ENCODE measurements at regions of chr2 and their contacts with region 1.

Region 1: GRCh38 chr2:240566203-240567136 is 1.8 kb upstream of the RNPEPL1 start:
- DNase-seq: peak; percentile 96
- H3K4me3 Mint-ChIP-seq: peak overlapping the region; percentile 93
- H3K27ac Mint-ChIP-seq: peak overlapping the region; percentile 98
- H3K4me1 Mint-ChIP-seq: peaks cover 64% of the 10 kb centered on the region
- H3K27me3 Mint-ChIP-seq: no peaks in the 10 kb centered on the region

Region 2: GRCh38 chr2:240513549-240514287 is 52.8 kb before region 1 on chr2:
- CTCF ChIA-PET with region 1: interaction called, 26 read pairs
- POLR2A ChIA-PET with region 1: interaction called, 4 read pairs
- intact Hi-C with region 1: loop called (anchors 5 kb)
- DNase-seq: peak; percentile 91
- H3K4me3 Mint-ChIP-seq: no peak overlapping the region
- H3K27ac Mint-ChIP-seq: peak overlapping the region; percentile 70
- H3K4me1 Mint-ChIP-seq: peaks cover 15% of the 10 kb centered on the region
- H3K27me3 Mint-ChIP-seq: no peaks in the 10 kb centered on the region

Region 3: DNA sequence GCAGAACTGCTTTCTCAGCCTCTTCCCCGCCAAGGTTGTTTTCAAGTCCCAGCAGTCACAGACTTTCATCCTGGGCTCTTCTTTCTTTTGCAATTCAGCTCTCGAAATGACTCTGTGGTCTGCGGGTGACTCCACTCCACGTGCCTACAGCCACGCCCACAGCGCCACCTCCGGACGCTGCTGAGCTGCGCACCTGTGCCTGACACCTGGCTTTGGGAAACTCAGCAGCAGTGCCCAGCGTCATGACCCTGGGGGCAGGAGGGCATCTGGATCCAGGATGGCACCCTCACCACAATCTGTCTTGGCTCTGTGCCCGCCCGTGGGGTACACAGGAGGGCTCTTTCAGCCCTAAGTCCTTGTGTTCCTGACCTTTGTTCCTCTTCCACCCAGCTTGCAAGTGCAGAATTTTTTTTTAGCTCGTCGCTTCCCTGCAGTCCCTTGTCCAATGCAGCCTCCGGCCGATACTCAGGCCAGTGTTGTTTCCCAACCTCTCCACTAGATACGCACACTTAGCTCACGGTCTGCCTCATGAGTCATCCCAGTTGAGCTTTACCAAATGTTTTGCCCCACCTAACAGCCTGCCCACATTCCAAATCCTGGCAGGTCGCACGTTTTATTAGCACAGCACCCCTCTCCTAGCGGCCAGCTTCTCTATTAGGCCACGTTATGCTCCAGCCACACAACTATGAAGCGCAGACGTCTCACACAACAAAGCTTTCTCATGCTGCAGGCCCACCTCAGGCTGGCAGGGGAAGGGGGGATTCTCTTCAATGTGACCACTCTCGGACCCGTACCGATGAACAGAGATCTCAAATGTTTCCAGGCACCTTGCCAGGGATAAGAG is 13.5 kb after region 1 on chr2:
- CTCF ChIA-PET with region 1: interaction called, 89 read pairs
- POLR2A ChIA-PET with region 1: interaction called, 34 read pairs
- intact Hi-C with region 1: loop called (anchors 1 kb)
- DNase-seq: peak; percentile 91
- H3K4me3 Mint-ChIP-seq: no peak overlapping the region
- H3K27ac Mint-ChIP-seq: peak overlapping the region; percentile 90
- H3K4me1 Mint-ChIP-seq: peaks cover 39% of the 10 kb centered on the region
- H3K27me3 Mint-ChIP-seq: no peaks in the 10 kb centered on the region

Region 4: DNA sequence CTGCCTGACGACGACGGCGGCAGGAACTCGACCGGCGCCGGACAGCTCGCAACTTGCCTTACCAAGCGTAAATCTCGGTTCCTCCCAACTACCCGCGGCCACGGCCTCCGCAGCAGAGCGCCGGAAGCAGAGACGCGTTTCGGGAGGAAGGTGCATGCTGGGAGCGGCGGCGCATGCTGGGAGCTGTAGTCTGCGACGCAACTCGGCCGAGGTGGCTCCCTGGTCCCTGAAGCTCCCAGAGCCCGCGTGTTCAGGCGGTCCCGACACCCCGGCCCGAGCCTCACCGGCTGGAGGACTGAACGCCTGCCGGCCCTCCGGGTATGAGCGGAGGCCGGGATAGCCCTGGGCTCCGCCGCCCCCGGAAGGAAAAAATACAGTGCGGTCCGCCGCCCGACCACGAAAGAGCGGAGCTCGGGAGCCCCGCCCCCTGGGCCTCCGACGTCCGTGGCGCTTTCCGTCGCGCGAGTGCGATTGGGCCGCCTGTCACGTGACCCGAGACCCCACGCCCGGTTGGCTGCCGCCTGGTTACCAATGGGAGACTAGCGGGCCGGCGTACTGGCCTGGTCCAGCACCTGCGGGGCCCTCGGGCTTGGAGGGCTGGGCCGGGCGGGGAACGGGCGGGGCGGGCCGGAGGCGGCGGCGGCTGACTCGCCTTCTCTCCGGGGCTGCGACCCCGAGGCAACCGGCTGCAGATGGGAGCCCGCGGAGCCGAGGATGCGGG is 19.9 kb after region 1 on chr2 and contains the start of gene CAPN10:
- CTCF ChIA-PET with region 1: interaction called, 89 read pairs
- POLR2A ChIA-PET with region 1: interaction called, 57 read pairs
- intact Hi-C with region 1: loop called (anchors 1 kb)
- DNase-seq: peak; percentile 98
- H3K4me3 Mint-ChIP-seq: peak within 1 kb of the TSS; percentile 98
- H3K27ac Mint-ChIP-seq: peak within 1 kb of the TSS; percentile 86
- H3K4me1 Mint-ChIP-seq: peaks cover 39% of the 10 kb centered on the region
- H3K27me3 Mint-ChIP-seq: no peaks in the 10 kb centered on the region
- total RNA-seq, gene CAPN10: 32.6 to 33.9 TPM

Region 5: DNA sequence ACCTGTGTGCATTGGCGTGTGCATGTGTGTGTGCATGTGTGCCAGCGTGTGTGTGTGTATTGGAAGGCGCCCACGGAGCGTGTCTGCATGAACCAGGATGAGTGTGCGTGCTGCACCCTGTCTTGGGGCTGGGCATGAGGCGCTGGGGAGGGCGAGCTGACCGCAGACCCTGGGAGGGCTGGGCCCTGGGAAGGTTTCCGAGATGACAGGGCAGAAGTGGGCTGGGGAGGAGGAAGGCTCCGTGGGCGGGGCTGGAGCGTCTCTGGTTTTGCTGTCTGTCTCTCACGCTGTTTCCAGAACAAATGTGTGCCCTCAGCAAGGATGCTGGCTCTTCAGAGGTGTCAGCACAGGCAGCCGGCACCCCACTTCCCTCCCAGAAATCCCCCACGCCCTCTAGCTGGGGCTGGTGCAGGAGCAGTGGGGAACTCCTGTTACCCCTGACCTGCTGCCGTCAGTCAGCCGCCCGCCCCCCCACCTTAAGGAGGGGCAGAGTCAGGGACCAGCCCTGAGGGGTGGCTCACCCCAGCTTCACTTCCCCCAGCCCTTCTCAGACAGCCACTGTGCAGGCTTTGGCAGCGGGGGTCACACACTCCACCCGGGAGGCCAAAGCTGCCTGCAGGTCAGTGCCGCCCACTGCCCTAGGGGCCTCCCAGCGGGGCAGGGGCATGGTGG is 58.6 kb after region 1 on chr2 and contains the start of gene GPR35:
- CTCF ChIA-PET with region 1: interaction called, 8 read pairs
- POLR2A ChIA-PET with region 1: interaction called, 26 read pairs
- intact Hi-C with region 1: loop called (anchors 1 kb)
- DNase-seq: peak; percentile 87
- H3K4me3 Mint-ChIP-seq: peak within 1 kb of the TSS; percentile 58
- H3K27ac Mint-ChIP-seq: peak within 1 kb of the TSS; percentile 69
- H3K4me1 Mint-ChIP-seq: peaks cover 48% of the 10 kb centered on the region
- H3K27me3 Mint-ChIP-seq: no peaks in the 10 kb centered on the region
- total RNA-seq, gene GPR35: 3.4 to 4.7 TPM

Region 6: DNA sequence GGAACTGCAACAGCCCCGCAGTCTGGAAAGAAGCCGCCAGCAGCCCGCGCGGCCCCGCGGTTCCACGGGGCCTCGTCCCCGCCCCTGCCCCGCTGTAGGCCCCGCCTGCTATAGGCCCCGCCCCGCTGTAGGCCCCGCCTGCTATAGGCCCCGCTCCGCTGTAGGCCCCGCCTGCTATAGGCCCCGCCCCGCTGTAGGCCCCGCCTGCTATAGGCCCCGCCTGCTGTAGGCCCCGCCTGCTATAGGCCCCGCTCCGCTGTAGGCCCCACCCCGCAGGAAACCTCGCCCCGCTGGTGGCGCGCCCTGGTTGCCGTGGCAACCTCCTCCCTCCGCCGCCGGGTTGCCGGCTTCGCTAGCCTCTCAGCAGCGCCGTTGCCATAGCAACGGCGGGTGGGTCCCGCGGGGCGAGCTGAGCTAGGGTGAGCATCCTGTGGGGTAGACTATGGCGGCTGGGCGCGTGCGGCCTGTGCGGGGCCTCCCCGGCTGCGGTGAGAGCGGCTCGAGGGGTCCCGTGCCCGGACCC is 265.8 kb after region 1 on chr2:
- CTCF ChIA-PET with region 1: no interaction called
- POLR2A ChIA-PET with region 1: no interaction called
- intact Hi-C with region 1: loop called (anchors 1 kb)
- DNase-seq: peak; percentile 97
- H3K4me3 Mint-ChIP-seq: peak overlapping the region; percentile 68
- H3K27ac Mint-ChIP-seq: no peak overlapping the region
- H3K4me1 Mint-ChIP-seq: no peaks in the 10 kb centered on the region
- H3K27me3 Mint-ChIP-seq: peaks cover 15% of the 10 kb centered on the region

Region 7: DNA sequence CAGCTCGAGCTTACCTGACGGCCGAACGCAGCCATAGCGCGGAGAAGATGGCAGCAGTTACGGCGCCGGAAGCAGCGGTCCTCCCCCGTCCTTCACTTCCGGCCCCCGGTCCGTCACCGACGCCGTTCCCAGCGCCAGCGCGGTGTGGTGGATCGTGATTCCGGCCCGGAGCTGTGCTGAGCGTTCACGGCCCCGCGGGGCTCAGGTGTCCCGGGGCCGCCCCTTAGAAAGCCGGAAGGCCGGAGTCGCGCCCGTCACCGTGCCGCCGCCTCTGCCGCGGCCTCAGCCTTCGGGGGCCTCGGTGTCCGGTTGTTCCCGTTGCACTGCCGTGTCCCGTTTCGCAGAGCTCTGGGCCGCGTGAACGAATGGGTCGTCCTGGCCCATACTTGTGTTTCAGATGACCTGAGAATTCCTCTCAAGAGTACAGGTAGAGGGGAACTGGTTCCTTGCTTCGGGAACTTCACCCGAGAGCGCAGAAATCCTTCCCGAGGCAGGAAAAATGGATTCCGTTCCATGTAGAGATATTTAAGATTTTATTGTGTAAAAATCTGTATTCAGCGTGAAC is 535.9 kb after region 1 on chr2 and contains the start of gene MTERF4:
- CTCF ChIA-PET with region 1: no interaction called
- POLR2A ChIA-PET with region 1: no interaction called
- intact Hi-C with region 1: loop called (anchors 5 kb)
- DNase-seq: peak; percentile 93
- H3K4me3 Mint-ChIP-seq: peak within 1 kb of the TSS; percentile 91
- H3K27ac Mint-ChIP-seq: peak within 1 kb of the TSS; percentile 95
- H3K4me1 Mint-ChIP-seq: peaks cover 61% of the 10 kb centered on the region
- H3K27me3 Mint-ChIP-seq: no peaks in the 10 kb centered on the region
- total RNA-seq, gene MTERF4: 43.9 to 46.0 TPM

Measured in activated CD4-positive, alpha-beta memory T cell treated with anti-CD3 and anti-CD28 coated beads for 36 hours (primary cell).